Mammary epithelial cell (primary cell): ENCODE measurements at regions of chr11 and their contacts with region 1.

Region 1: GRCh38 chr11:77820563-77821348 is at the starts of genes AAMDC and RSF1:
- DNase-seq: peak; percentile 98
- H3K4me3 ChIP-seq: peak within 1 kb of the TSS; percentile 93 to 99 (median 98)
- H3K27ac ChIP-seq: peak within 1 kb of the TSS; percentile 60
- H3K4me1 ChIP-seq: peaks cover 5% of the 10 kb centered on the region
- H3K27me3 ChIP-seq: no peaks in the 10 kb centered on the region
- CTCF ChIP-seq: peak; percentile 34 to 88
- total RNA-seq, gene AAMDC: 7.8 to 14.0 TPM
- total RNA-seq, gene RSF1: 23.0 to 46.6 TPM

Region 2: GRCh38 chr11:77637345-77638165 is 183.2 kb before region 1 on chr11 and contains the start of gene CLNS1A:
- CTCF ChIA-PET with region 1: no interaction called
- dilution Hi-C with region 1: no loop called
- in situ Hi-C with region 1: no loop called
- intact Hi-C with region 1: loop called (anchors 5 kb)
- DNase-seq: peak; percentile 85
- H3K4me3 ChIP-seq: peak within 1 kb of the TSS; percentile 90 to 93 (median 90)
- H3K27ac ChIP-seq: peak within 1 kb of the TSS; percentile 59
- H3K4me1 ChIP-seq: no peaks in the 10 kb centered on the region
- H3K27me3 ChIP-seq: no peaks in the 10 kb centered on the region
- CTCF ChIP-seq: no peak
- total RNA-seq, gene CLNS1A: 72.7 to 103 TPM

Region 3: GRCh38 chr11:77779935-77780334 is 40.8 kb before region 1 on chr11:
- CTCF ChIA-PET with region 1: no interaction called
- dilution Hi-C with region 1: no loop called
- in situ Hi-C with region 1: no loop called
- intact Hi-C with region 1: no loop called
- DNase-seq: peak; percentile 33
- H3K4me3 ChIP-seq: no peak overlapping the region
- H3K27ac ChIP-seq: no peak overlapping the region
- H3K4me1 ChIP-seq: no peaks in the 10 kb centered on the region
- H3K27me3 ChIP-seq: no peaks in the 10 kb centered on the region
- CTCF ChIP-seq: no peak

Region 4: GRCh38 chr11:77865805-77866204 is 45.0 kb after region 1 on chr11:
- CTCF ChIA-PET with region 1: no interaction called
- dilution Hi-C with region 1: no loop called
- in situ Hi-C with region 1: no loop called
- intact Hi-C with region 1: no loop called
- DNase-seq: no peak
- H3K4me3 ChIP-seq: no peak overlapping the region
- H3K27ac ChIP-seq: no peak overlapping the region
- H3K4me1 ChIP-seq: no peaks in the 10 kb centered on the region
- H3K27me3 ChIP-seq: no peaks in the 10 kb centered on the region
- CTCF ChIP-seq: no peak

Region 5: GRCh38 chr11:77879218-77879617 is 58.5 kb after region 1 on chr11:
- CTCF ChIA-PET with region 1: interaction called, 26 read pairs
- dilution Hi-C with region 1: no loop called
- in situ Hi-C with region 1: no loop called
- intact Hi-C with region 1: no loop called
- DNase-seq: no peak
- H3K4me3 ChIP-seq: no peak overlapping the region
- H3K27ac ChIP-seq: no peak overlapping the region
- H3K4me1 ChIP-seq: peaks cover 4% of the 10 kb centered on the region
- H3K27me3 ChIP-seq: no peaks in the 10 kb centered on the region
- CTCF ChIP-seq: no peak

Region 6: DNA sequence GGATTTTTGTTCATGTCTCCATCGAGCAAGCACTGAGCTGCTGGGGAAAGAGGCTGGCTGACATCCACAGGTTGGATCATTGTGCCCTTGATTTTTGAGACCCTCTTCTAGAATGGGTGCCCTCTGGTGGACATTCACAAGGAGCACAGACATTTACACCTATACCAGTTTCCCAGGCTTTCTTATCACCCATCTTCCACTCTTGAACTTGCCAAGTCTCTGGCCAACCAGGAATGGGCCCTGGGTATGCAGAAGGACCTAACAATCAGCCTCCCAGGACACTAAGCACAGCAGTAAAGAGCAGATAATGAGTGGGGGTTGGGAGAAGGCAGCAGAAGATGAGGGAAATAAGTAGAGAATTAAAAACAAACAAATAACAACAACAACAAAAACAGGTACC is 179.4 kb after region 1 on chr11:
- CTCF ChIA-PET with region 1: no interaction called
- dilution Hi-C with region 1: no loop called
- in situ Hi-C with region 1: no loop called
- intact Hi-C with region 1: loop called (anchors 1 kb)
- DNase-seq: peak; percentile 48
- H3K4me3 ChIP-seq: no peak overlapping the region
- H3K27ac ChIP-seq: no peak overlapping the region
- H3K4me1 ChIP-seq: peaks cover 1% of the 10 kb centered on the region
- H3K27me3 ChIP-seq: no peaks in the 10 kb centered on the region
- CTCF ChIP-seq: peak; percentile 68 to 76

Region 7: DNA sequence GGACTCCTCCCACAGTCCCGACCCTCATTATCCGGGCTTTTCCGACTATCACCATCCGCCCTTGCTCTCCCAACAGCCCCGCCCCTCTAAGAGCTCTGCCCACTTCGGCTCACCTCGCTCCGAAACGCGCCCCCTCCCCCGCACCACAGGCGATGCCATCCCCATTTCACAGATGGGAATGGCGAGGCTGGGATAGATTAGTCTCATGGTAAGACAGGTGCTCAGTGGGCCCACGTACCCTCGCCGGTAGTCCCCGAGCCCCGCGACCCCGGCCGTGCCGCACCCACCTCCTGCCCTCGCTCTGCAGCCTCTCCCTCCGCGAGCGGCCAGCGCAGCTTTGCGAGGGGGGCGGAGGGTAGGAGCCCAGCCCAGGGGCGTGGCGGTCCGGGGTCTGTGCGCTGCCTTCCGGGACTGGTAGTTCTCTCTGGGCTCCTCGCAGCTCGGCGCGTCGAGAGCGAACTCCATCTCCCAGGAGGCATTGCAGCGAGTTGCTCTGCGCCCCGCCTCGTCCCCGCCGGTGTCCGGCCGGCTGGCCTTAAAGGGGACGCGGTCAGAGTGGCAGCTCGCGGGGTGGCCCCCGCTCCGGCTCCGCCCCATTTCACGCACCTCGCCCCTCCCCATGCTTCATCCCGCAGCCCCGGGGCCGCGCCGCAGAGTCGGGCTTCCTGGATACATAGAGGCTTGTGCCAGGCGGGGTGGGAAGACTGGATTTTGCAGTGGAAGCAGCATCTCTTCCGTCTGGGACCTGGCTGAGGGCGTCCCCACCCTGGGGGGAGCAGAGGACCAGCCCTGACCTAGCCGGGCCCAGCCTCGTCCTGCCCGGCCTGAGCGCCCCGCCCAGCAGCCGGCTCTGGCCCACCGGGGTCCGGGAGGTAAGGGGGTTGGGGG is 367.8 kb after region 1 on chr11 and contains the starts of genes KCTD21 and USP35:
- CTCF ChIA-PET with region 1: no interaction called
- dilution Hi-C with region 1: no loop called
- in situ Hi-C with region 1: no loop called
- intact Hi-C with region 1: loop called (anchors 5 kb)
- DNase-seq: peak; percentile 96
- H3K4me3 ChIP-seq: peak within 1 kb of the TSS; percentile 53 to 99 (median 71)
- H3K27ac ChIP-seq: peak within 1 kb of the TSS; percentile 52
- H3K4me1 ChIP-seq: peaks cover 41% of the 10 kb centered on the region
- H3K27me3 ChIP-seq: no peaks in the 10 kb centered on the region
- CTCF ChIP-seq: no peak
- total RNA-seq, gene KCTD21: 8.7 to 9.7 TPM
- total RNA-seq, gene USP35: 10.7 to 13.3 TPM